ENCODE measurements at regions of chr22 and their contacts with region 1.

Region 1: GRCh38 chr22:33579448-33580093 is 340.7 kb downstream of the LARGE1 start:
- DNase-seq: peak; percentile 48 to 88 (median 52)
- ATAC-seq: peak; percentile 93
- H3K4me3 ChIP-seq: no peak overlapping the region
- H3K4me1 ChIP-seq: no peaks in the 10 kb centered on the region
- CTCF ChIP-seq: peak; percentile 79

Region 2: DNA sequence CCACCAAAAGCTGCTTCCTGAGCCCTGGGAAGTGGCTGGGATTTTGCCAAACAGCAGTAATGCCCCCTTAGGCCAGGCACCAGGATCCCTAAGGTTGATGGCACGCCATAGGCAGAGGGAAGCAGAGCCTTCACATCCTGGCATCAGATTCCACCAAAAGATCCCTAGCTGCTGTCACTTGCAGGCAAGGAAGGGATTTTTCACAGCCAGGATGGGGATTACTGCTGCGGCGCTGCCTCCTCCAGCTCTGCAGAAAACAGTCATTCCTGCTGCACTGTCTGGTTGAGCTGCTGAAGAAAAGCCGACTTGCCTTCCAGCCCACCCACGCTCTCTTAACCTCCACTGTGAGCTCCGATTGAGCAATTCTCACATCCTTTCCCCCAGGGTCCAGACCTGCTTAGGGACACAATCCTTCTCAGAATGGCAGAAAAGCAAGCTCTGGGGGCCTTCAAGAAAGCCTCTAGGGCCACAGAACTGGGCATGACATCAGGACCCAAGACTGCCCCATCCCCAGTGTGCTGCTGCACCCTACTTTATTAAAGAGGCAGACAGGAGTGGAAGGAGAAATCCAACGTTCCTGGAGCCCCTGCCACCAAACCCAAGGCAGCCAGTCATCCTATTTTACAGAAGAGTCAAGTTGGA is 541.3 kb before region 1 on chr22:
- intact Hi-C with region 1: no loop called
- DNase-seq: no peak
- ATAC-seq: no peak
- H3K4me3 ChIP-seq: no peak overlapping the region
- H3K4me1 ChIP-seq: no peaks in the 10 kb centered on the region
- CTCF ChIP-seq: no peak

Region 3: GRCh38 chr22:33524511-33525260 is 54.9 kb before region 1 on chr22:
- intact Hi-C with region 1: loop called in 1 of 2 experiments (anchors 5 kb)
- DNase-seq: no peak
- ATAC-seq: no peak
- H3K4me3 ChIP-seq: no peak overlapping the region
- H3K4me1 ChIP-seq: no peaks in the 10 kb centered on the region
- CTCF ChIP-seq: no peak

Measured in mucosa of descending colon (tissue), 3 donors.